Endothelial cell of umbilical vein (primary cell): ENCODE measurements at regions of chr1 and their contacts with region 1.

Region 1: DNA sequence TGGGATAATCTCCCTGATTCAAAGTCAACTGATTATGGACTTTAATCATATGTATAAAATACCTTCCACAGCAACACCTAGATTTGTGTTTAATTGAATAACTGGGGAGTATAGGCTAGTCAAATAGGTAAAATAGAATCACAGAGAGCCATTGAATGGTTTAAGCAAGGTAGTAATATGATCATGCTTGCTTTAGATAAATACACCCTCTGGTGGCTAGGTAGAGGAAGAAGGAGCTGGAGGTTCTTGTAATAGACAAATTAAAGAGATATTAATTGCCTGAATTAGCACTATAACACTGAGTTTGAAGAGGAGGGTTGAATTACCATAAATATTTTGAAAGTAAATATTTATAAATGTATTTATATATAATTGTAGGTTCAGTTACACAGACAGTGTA is 40.3 kb downstream of the DIRAS3 start:
- DNase-seq: peak; percentile 49
- H3K4me3 ChIP-seq: no peak overlapping the region
- H3K27ac ChIP-seq: no peak overlapping the region
- H3K4me1 ChIP-seq: peaks cover 12% of the 10 kb centered on the region
- H3K27me3 ChIP-seq: no peaks in the 10 kb centered on the region
- CTCF ChIP-seq: peak; percentile 10 to 30
- POLR2A ChIP-seq: no peak

Region 2: DNA sequence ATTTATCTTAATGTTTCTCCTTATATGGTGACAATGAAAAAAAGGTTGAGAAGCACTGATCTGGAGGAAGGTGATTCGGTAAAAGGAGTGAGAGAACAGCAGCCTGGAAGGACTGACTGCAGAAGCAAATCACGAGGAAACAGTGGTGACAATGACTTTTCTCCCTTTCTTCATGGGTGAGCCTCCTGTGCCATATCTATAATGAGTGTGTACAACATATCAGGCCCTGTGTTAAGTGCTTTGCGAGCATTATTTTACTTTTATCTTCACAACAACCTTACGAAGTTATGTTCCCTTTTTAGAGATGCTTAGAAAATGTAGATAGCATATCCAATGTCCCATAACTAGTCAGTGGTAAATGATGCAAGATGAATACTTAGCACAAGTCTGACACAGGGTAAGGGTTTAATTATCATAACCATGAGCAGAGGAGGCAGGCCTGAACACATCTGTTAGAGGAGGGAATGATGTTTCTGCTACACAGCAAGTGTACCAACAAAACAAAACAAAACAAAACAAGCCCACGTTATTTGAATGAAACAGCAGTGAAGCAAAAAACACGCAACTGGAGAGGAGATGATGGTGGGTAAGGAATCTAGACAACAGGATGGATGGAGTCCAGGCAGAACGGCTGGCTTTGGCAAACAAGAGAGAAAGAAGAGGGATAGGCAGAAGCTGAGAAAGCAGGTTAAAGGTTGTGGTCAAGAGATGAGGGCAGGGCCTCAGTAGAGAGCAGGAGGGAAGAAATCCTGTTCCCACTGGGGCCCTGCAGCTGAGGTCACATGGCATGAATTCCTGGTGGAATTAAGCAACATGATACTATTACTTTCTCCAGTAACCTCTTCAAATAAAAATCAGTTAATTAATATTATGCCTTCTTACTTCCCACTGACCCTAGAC is 206.5 kb before region 1 on chr1:
- CTCF ChIA-PET with region 1: no interaction called
- POLR2A ChIA-PET with region 1: no interaction called
- dilution Hi-C with region 1: no loop called
- intact Hi-C with region 1: no loop called
- DNase-seq: no peak
- H3K4me3 ChIP-seq: no peak overlapping the region
- H3K27ac ChIP-seq: no peak overlapping the region
- H3K4me1 ChIP-seq: no peaks in the 10 kb centered on the region
- H3K27me3 ChIP-seq: no peaks in the 10 kb centered on the region
- CTCF ChIP-seq: no peak
- POLR2A ChIP-seq: no peak

Region 3: DNA sequence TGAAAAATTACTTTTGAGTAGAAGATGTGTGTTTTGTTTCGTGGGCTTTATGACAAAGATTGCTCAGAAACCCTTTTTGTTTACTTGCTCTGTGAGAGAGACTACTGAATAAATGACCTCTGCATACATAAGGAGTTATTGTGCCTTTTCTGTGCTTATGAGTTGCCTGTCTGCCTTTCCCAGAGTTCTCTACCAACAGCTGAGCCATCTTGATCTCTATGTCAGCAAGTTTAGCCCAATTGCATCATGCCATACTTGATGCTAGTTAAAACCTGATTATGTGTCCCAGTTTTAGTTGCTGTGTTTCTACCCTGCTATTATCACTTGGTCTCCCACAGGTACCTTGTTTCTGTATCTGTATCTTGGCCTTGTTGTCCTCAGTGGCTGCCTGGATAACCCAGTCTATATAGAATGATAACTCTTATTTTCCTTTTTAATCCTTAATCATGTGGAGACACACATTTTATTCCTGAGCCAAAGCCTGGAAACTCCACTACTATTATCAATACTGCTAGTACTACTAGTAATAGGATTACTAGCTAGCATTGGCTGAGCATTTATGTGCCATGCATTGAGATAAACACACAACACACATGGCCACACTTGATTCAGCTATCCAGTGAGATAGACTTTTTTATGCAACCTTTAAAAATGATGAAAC is 148.1 kb before region 1 on chr1:
- CTCF ChIA-PET with region 1: interaction called, 147 read pairs
- POLR2A ChIA-PET with region 1: no interaction called
- dilution Hi-C with region 1: no loop called
- intact Hi-C with region 1: no loop called
- DNase-seq: no peak
- H3K4me3 ChIP-seq: no peak overlapping the region
- H3K27ac ChIP-seq: no peak overlapping the region
- H3K4me1 ChIP-seq: peaks cover 2% of the 10 kb centered on the region
- H3K27me3 ChIP-seq: no peaks in the 10 kb centered on the region
- CTCF ChIP-seq: no peak
- POLR2A ChIP-seq: no peak

Region 4: DNA sequence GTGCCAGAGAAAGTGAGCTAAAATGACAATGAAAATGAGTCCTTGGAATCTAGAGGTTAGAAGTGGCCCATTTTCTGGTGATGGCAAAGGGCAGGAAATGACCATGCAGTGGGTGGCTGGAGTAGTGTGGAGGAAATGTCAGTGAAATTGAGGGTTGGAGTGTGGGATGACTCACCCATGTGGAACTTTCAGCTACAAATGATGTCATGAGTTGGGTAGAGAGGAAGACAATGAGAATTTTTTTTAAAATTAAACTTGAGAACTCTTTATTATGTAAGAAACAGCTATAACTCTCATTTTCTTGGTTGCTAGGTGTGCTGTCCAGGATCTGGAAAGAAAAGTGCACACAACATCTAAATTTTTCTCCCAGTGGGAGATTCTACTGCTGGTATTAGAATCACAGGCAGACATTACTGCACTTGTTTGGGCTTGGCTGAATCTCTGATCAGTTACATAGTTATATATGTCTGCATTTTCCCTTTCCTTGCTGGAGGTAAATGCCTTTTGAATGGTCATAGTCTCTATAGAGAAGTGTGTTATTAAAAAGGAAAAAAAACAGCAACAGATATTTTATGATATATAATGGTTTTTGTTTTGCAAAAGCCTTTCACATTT is 120.0 kb before region 1 on chr1:
- CTCF ChIA-PET with region 1: interaction called, 12 read pairs
- POLR2A ChIA-PET with region 1: no interaction called
- dilution Hi-C with region 1: no loop called
- intact Hi-C with region 1: no loop called
- DNase-seq: peak; percentile 93
- H3K4me3 ChIP-seq: no peak overlapping the region
- H3K27ac ChIP-seq: peak overlapping the region; percentile 79
- H3K4me1 ChIP-seq: peaks cover 26% of the 10 kb centered on the region
- H3K27me3 ChIP-seq: no peaks in the 10 kb centered on the region
- CTCF ChIP-seq: no peak
- POLR2A ChIP-seq: no peak

Region 5: GRCh38 chr1:67897270-67897949 is 112.7 kb before region 1 on chr1:
- CTCF ChIA-PET with region 1: interaction called, 21 read pairs
- POLR2A ChIA-PET with region 1: no interaction called
- dilution Hi-C with region 1: no loop called
- intact Hi-C with region 1: no loop called
- DNase-seq: peak; percentile 97
- H3K4me3 ChIP-seq: no peak overlapping the region
- H3K27ac ChIP-seq: peak overlapping the region; percentile 91
- H3K4me1 ChIP-seq: peaks cover 26% of the 10 kb centered on the region
- H3K27me3 ChIP-seq: no peaks in the 10 kb centered on the region
- CTCF ChIP-seq: no peak
- POLR2A ChIP-seq: no peak

Region 6: DNA sequence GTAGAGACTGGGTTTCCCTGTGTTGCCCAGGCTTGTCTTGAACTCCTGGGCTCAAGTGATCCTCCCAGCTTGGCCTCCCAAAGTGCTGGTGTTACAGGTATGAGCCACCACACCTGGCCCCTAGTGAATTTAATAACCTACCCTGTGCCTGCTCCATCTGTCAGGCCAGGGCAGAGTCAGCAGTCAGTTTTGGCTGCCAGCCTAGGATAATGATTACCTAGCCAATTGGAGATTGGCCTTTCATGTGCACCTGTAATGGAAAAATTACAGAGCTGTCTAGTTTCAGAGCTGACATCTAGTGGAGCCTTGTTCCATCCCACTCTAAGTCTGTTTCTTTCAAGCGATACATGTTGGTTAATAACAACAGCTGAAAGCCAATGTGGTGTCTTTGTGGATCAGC is 51.6 kb before region 1 on chr1:
- CTCF ChIA-PET with region 1: no interaction called
- POLR2A ChIA-PET with region 1: no interaction called
- dilution Hi-C with region 1: no loop called
- intact Hi-C with region 1: no loop called
- DNase-seq: no peak
- H3K4me3 ChIP-seq: no peak overlapping the region
- H3K27ac ChIP-seq: no peak overlapping the region
- H3K4me1 ChIP-seq: no peaks in the 10 kb centered on the region
- H3K27me3 ChIP-seq: no peaks in the 10 kb centered on the region
- CTCF ChIP-seq: no peak
- POLR2A ChIP-seq: no peak

Region 7: GRCh38 chr1:67980028-67980427 is 30.1 kb before region 1 on chr1:
- CTCF ChIA-PET with region 1: no interaction called
- POLR2A ChIA-PET with region 1: no interaction called
- dilution Hi-C with region 1: no loop called
- intact Hi-C with region 1: no loop called
- DNase-seq: no peak
- H3K4me3 ChIP-seq: no peak overlapping the region
- H3K27ac ChIP-seq: no peak overlapping the region
- H3K4me1 ChIP-seq: peaks cover 2% of the 10 kb centered on the region
- H3K27me3 ChIP-seq: no peaks in the 10 kb centered on the region
- CTCF ChIP-seq: no peak
- POLR2A ChIP-seq: no peak

Region 8: GRCh38 chr1:67991546-67991945 is 18.5 kb before region 1 on chr1:
- CTCF ChIA-PET with region 1: interaction called, 12 read pairs
- POLR2A ChIA-PET with region 1: no interaction called
- dilution Hi-C with region 1: no loop called
- intact Hi-C with region 1: no loop called
- DNase-seq: no peak
- H3K4me3 ChIP-seq: no peak overlapping the region
- H3K27ac ChIP-seq: no peak overlapping the region
- H3K4me1 ChIP-seq: no peaks in the 10 kb centered on the region
- H3K27me3 ChIP-seq: no peaks in the 10 kb centered on the region
- CTCF ChIP-seq: no peak
- POLR2A ChIP-seq: no peak

Region 9: GRCh38 chr1:68024389-68025338 is 14.6 kb after region 1 on chr1:
- CTCF ChIA-PET with region 1: interaction called, 15 read pairs
- POLR2A ChIA-PET with region 1: no interaction called
- dilution Hi-C with region 1: no loop called
- intact Hi-C with region 1: no loop called
- DNase-seq: no peak
- H3K4me3 ChIP-seq: no peak overlapping the region
- H3K27ac ChIP-seq: no peak overlapping the region
- H3K4me1 ChIP-seq: peaks cover 4% of the 10 kb centered on the region
- H3K27me3 ChIP-seq: no peaks in the 10 kb centered on the region
- CTCF ChIP-seq: no peak
- POLR2A ChIP-seq: no peak

Region 10: GRCh38 chr1:68111519-68112436 is 101.7 kb after region 1 on chr1:
- CTCF ChIA-PET with region 1: interaction called, 7 read pairs
- POLR2A ChIA-PET with region 1: no interaction called
- dilution Hi-C with region 1: no loop called
- intact Hi-C with region 1: loop called (anchors 5 kb)
- DNase-seq: peak; percentile 88
- H3K4me3 ChIP-seq: no peak overlapping the region
- H3K27ac ChIP-seq: no peak overlapping the region
- H3K4me1 ChIP-seq: peaks cover 8% of the 10 kb centered on the region
- H3K27me3 ChIP-seq: no peaks in the 10 kb centered on the region
- CTCF ChIP-seq: peak; percentile 68
- POLR2A ChIP-seq: no peak